HEK293 (cell line): ENCODE measurements at regions of chr5 and their contacts with region 1.

Region 1: DNA sequence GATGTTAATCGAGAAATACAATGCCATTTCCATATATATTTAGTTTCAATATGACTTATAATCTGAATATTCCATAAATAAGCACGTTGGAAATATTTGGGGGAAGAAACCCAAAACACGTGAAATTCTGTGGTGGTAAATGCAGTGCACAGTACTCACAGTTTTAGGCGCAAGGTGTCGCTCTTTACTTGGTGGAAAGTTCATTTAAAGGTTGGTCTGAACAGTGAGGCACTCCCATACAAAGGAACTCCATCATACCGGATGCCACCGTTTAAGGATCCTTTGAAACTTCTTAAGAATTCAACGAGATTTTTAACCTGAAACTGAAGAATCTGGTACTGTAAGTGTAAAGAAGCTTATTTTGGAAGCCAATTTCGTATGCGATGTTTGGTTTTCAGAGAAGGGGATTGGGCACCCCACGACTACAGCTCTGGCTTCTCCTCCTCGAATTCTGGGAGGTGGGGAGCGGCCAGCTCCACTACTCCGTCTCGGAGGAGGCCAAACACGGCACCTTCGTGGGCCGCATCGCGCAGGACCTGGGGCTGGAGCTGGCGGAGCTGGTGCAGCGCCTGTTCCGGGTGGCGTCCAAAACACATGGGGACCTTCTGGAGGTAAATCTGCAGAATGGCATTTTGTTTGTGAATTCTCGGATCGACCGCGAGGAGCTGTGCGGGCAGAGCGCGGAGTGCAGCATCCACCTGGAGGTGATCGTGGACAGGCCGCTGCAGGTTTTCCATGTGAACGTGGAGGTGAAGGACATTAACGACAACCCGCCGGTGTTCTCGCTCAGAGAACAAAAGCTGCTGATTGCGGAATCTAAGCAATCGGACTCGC is at the start of gene PCDHA11:
- H3K4me3 ChIP-seq: peak within 1 kb of the TSS; percentile 17; the same call in 1 of the 2 replicates
- H3K27ac ChIP-seq: no peak within 1 kb of the TSS
- H3K4me1 ChIP-seq: no peaks in the 10 kb centered on the region
- CTCF ChIP-seq: no peak

Region 2: DNA sequence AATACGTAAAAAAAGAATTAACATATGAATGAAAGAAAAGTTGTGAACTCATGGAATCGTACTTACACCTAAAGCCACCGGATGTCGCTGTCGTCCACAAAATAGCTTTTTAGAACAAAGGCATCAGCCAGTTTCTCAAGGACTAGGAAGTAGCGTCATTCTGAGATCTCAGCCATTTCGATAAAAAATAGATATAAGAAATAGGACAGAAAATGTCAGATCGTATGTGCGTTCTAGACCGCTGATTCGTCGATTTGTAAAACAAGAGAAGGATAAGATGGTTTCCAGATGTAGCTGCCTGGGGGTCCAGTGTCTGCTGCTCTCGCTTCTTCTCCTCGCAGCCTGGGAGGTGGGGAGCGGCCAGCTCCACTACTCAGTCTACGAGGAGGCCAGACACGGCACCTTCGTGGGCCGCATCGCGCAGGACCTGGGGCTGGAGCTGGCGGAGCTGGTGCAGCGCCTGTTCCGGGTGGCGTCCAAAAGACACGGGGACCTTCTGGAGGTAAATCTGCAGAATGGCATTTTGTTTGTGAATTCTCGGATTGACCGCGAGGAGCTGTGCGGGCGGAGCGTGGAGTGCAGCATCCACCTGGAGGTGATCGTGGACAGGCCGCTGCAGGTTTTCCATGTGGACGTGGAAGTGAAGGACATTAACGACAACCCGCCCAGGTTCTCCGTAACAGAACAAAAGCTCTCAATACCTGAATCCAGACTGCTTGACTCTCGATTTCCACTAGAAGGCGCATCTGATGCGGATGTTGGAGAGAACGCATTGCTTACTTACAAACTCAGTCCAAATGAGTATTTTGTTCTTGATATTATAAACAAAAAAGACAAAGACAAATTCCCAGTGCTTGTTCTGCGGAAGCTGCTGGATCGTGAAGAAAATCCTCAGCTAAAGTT is 12.9 kb before region 1 on chr5 and contains the start of gene PCDHA10:
- CTCF ChIA-PET with region 1: interaction called, 17 read pairs
- POLR2A ChIA-PET with region 1: no interaction called
- H3K4me3 ChIP-seq: peak within 1 kb of the TSS; percentile 10
- H3K27ac ChIP-seq: no peak within 1 kb of the TSS
- H3K4me1 ChIP-seq: no peaks in the 10 kb centered on the region
- CTCF ChIP-seq: no peak

Region 3: DNA sequence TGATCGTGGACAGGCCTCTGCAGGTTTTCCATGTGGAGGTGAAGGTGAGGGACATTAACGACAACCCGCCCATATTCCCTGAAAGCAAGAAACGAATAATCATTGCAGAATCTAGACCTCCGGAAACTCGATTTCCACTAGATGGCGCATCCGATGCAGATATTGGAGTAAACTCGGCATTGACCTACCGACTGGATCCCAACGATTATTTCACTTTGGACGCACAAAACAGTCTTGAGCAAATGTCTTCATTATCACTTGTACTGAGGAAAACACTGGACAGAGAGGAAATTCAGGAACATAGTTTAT is 13.6 kb after region 1 on chr5:
- CTCF ChIA-PET with region 1: interaction called, 17 read pairs
- POLR2A ChIA-PET with region 1: no interaction called
- H3K4me3 ChIP-seq: no peak overlapping the region
- H3K27ac ChIP-seq: no peak overlapping the region
- H3K4me1 ChIP-seq: no peaks in the 10 kb centered on the region
- CTCF ChIP-seq: no peak